ENCODE measurements at regions of chr15 and their contacts with region 1.

Region 1: DNA sequence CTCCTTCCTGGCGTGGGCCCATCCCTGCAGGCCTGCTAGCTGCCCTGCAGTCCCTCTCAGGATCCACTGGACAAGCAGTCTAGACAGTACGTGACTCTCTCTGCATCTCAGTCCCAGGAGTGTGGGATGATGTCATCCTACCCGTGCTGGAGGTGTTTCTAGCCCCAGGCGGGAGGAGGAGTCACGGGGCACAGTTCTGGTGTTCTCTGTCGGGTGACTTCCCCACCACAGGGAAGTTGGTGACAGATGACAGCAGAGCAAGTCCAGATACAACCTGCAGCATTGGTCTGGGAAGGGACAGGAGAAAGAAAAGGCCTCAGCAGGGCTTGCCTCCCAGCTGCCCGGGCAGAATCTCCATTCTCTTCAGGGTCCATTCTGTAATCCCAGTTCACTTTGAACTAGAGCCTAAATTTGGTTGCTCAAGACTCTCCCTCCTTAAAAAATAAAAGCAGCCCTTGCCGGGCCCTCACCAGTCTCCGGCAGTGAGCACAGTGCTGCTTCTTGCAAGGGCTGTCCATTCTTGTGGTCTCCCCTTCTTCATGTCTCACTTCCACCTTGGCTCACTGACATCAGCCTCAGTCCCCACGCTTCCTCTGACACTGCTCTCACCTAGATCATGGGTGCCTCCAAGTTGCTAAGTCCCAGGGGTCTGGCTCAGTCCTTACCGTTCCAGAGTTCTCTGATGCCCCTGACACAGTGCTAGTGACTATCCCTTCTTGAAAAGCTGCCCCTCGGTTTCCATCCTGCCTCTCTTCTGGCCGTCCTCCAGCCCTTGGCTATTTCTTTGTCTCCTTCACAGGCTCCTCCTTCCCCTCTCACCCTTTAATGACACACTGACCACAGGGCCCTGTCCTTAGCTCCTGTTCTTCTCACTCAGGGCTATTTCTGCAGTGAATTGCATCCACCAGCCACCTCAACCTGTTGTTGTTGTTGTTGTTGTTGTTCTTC is 30.8 kb downstream of the SLC28A1 start:
- DNase-seq: peak; percentile 57 to 74 (median 58)
- H3K4me3 ChIP-seq: no peak overlapping the region
- H3K27ac ChIP-seq: peak overlapping the region; percentile 54 to 60
- H3K4me1 ChIP-seq: peaks cover 18% of the 10 kb centered on the region
- H3K27me3 ChIP-seq: no peaks in the 10 kb centered on the region
- CTCF ChIP-seq: no peak
- EP300 ChIP-seq: no peak
- POLR2A ChIP-seq: no peak

Region 2: GRCh38 chr15:84826369-84826823 is 88.9 kb before region 1 on chr15:
- intact Hi-C with region 1: loop called in 1 of 4 experiments (anchors 10 kb)
- DNase-seq: peak in 2 of 5 donors; percentile 34 to 57
- H3K4me3 ChIP-seq: no peak overlapping the region
- H3K27ac ChIP-seq: peak overlapping the region in 1 of 2 donors; percentile 55
- H3K4me1 ChIP-seq: peaks cover 24% of the 10 kb centered on the region
- H3K27me3 ChIP-seq: no peaks in the 10 kb centered on the region
- CTCF ChIP-seq: no peak
- EP300 ChIP-seq: no peak
- POLR2A ChIP-seq: no peak

Region 3: GRCh38 chr15:84962969-84963368 is 47.7 kb after region 1 on chr15:
- intact Hi-C with region 1: no loop called
- DNase-seq: no peak
- H3K4me3 ChIP-seq: no peak overlapping the region
- H3K27ac ChIP-seq: no peak overlapping the region
- H3K4me1 ChIP-seq: no peaks in the 10 kb centered on the region
- H3K27me3 ChIP-seq: no peaks in the 10 kb centered on the region
- CTCF ChIP-seq: no peak
- EP300 ChIP-seq: no peak
- POLR2A ChIP-seq: no peak

Measured in ovary (tissue), 10 donors.